CD4-positive, alpha-beta memory T cell (primary cell): ENCODE measurements at regions of chr17 and their contacts with region 1.

Region 1: GRCh38 chr17:39401412-39402243 is at the start of gene FBXL20:
- DNase-seq: peak; percentile 90 to 95 (median 92)
- H3K4me3 ChIP-seq: peak within 1 kb of the TSS; percentile 87 to 89
- H3K4me3 Mint-ChIP-seq: peak within 1 kb of the TSS; percentile 93 to 99 (median 97)
- H3K27ac ChIP-seq: peak within 1 kb of the TSS; percentile 85
- H3K27ac Mint-ChIP-seq: peak within 1 kb of the TSS; percentile 97 to 99 (median 98)
- H3K4me1 ChIP-seq: peaks cover 17% of the 10 kb centered on the region
- H3K4me1 Mint-ChIP-seq: peaks cover 28 to 54% (median 41%) of the 10 kb centered on the region in 4 donors
- H3K27me3 ChIP-seq: no peaks in the 10 kb centered on the region
- H3K27me3 Mint-ChIP-seq: peaks cover 0 to 2% of the 10 kb centered on the region in 2 donors
- total RNA-seq, gene FBXL20: 35.3 to 38.5 TPM

Region 2: DNA sequence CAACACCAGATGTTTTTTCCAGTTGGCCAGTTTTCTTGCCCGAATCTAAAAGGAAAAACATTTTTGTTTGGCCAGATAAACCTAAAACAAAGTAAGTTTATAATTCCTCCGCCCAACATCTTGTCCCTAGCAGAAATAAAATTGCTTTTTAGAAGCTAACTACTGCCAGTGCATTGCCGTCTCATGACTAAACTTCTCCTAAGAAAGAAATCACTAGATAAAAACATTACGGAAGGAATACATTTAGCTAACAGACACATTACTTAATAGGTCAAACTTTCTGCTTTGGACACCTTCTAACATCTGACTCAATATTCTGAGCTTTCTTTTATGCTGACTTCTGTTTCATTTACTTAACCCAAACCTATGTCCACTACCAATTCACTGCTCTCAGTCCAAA is 36.4 kb before region 1 on chr17:
- CTCF ChIA-PET with region 1: no interaction called
- POLR2A ChIA-PET with region 1: no interaction called
- intact Hi-C with region 1: no loop called
- DNase-seq: no peak
- H3K4me3 ChIP-seq: no peak overlapping the region
- H3K4me3 Mint-ChIP-seq: no peak overlapping the region
- H3K27ac ChIP-seq: no peak overlapping the region
- H3K27ac Mint-ChIP-seq: peak overlapping the region in 1 of 7 donors; percentile 37
- H3K4me1 ChIP-seq: no peaks in the 10 kb centered on the region
- H3K4me1 Mint-ChIP-seq: peaks cover 13 to 22% (median 17%) of the 10 kb centered on the region in 4 donors
- H3K27me3 ChIP-seq: no peaks in the 10 kb centered on the region
- H3K27me3 Mint-ChIP-seq: no peaks in the 10 kb centered on the region

Region 3: GRCh38 chr17:39450847-39451581 is 49.4 kb after region 1 on chr17 and contains the start of gene MED1:
- CTCF ChIA-PET with region 1: no interaction called
- POLR2A ChIA-PET with region 1: interaction called, 5 read pairs
- intact Hi-C with region 1: loop called (anchors 1 kb)
- DNase-seq: peak; percentile 92 to 96 (median 94)
- H3K4me3 ChIP-seq: peak within 1 kb of the TSS; percentile 94
- H3K4me3 Mint-ChIP-seq: peak within 1 kb of the TSS; percentile 93 to 97 (median 96)
- H3K27ac ChIP-seq: peak within 1 kb of the TSS; percentile 83
- H3K27ac Mint-ChIP-seq: peak within 1 kb of the TSS; percentile 97 to 99 (median 99)
- H3K4me1 ChIP-seq: peaks cover 29% of the 10 kb centered on the region
- H3K4me1 Mint-ChIP-seq: peaks cover 12 to 32% (median 22%) of the 10 kb centered on the region in 4 donors
- H3K27me3 ChIP-seq: no peaks in the 10 kb centered on the region
- H3K27me3 Mint-ChIP-seq: no peaks in the 10 kb centered on the region
- total RNA-seq, gene MED1: 59.1 to 62.3 TPM

Region 4: DNA sequence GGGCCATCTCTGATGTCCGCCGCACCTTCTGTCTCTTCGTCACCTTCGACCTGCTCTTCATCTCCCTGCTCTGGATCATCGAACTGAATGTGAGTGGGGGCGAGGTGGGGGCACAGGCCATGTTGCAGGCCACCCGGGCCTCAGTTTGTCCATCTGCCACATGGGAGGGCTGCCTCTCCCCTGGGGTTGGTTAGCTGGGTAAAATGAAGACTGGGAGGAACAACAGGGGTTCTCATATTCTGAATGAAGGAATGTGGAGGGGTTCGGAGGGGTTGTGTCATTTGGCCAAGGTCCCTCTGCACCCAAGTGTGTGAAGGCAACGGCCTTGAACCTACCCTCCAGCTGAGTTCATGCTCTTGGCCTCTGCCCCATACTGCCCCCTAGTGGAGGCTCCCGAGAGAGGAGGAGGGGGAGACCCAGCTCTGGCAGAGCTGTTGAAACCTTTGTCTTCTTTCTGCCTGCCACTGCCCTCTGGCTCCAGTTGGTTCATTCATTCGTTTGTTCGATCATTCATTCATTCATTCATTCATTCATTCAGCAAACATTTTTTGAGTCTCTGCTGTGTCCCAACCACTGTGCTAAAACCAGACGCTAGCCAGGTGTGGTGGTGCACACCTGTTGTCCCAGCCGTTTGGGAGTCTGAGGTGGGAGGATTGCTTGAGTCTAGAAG is 252.2 kb after region 1 on chr17:
- CTCF ChIA-PET with region 1: no interaction called
- POLR2A ChIA-PET with region 1: no interaction called
- intact Hi-C with region 1: no loop called
- DNase-seq: peak; percentile 65 to 75 (median 73)
- H3K4me3 ChIP-seq: no peak overlapping the region
- H3K4me3 Mint-ChIP-seq: no peak overlapping the region
- H3K27ac ChIP-seq: no peak overlapping the region
- H3K27ac Mint-ChIP-seq: peak overlapping the region in 3 of 7 donors; percentile 69 to 78 (median 78)
- H3K4me1 ChIP-seq: peaks cover 10% of the 10 kb centered on the region
- H3K4me1 Mint-ChIP-seq: peaks cover 24 to 55% (median 27%) of the 10 kb centered on the region in 4 donors
- H3K27me3 ChIP-seq: no peaks in the 10 kb centered on the region
- H3K27me3 Mint-ChIP-seq: no peaks in the 10 kb centered on the region